Activated naive CD4-positive, alpha-beta T cell treated with anti-CD3 and anti-CD28 coated beads for 36 hours (primary cell): ENCODE measurements at regions of chr19 and their contacts with region 1.

Region 1: GRCh38 chr19:5803752-5804515 is 933 bp upstream of the NRTN start:
- DNase-seq: peak; percentile 96
- H3K4me3 Mint-ChIP-seq: peak overlapping the region; percentile 70
- H3K27ac Mint-ChIP-seq: no peak overlapping the region
- H3K4me1 Mint-ChIP-seq: peaks cover 25% of the 10 kb centered on the region
- H3K27me3 Mint-ChIP-seq: peaks cover 19% of the 10 kb centered on the region

Region 2: GRCh38 chr19:5891938-5892771 is 88.2 kb after region 1 on chr19:
- CTCF ChIA-PET with region 1: interaction called, 28 read pairs
- intact Hi-C with region 1: loop called (anchors 1 kb)
- DNase-seq: peak; percentile 35
- H3K4me3 Mint-ChIP-seq: no peak overlapping the region
- H3K27ac Mint-ChIP-seq: no peak overlapping the region
- H3K4me1 Mint-ChIP-seq: no peaks in the 10 kb centered on the region
- H3K27me3 Mint-ChIP-seq: peaks cover 6% of the 10 kb centered on the region